Keratinocyte (primary cell): ENCODE measurements at regions of chr6 and their contacts with region 1.

Region 1: DNA sequence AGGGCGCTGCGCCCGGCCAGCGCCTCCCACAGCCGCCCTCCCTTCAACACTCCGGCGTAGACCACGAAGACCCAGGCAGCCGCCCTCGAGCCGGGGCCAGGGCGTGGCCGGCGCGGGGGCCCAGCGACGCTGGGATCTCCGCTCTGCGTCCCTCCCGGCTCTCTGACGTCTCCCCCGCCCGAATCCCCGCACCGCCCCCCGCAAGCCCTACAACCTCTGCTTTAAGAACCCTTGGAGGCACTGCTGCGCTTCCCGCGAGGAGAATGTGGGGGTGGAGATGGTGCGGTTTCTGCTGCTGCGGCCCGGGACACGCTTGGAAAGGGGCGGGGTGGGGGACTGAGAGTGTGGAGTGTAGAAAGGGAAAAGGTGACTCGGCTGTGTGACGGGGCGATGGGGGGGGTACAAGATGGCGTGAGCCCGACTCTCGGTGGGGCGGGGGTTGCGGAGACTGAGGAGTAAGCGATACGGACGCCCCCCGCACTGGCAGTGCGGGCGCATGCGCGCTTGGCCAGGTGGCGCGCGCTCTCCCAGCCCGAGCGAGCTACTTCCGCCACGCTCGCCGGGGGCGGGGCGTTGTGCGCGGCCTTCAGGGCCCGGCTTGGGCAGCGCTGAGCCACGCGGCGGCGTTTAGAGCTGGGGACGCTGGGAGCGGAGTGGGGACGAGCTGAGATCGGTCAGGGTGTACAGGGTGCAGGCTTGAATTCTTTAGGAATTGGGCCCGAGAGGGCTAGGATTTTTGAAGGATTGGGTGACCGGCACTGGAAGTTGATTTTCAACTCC is at the start of gene SUPT3H:
- DNase-seq: peak; percentile 33
- H3K4me3 ChIP-seq: peak within 1 kb of the TSS; percentile 83 to 89 (median 87)
- H3K27ac ChIP-seq: peak within 1 kb of the TSS; percentile 95
- H3K4me1 ChIP-seq: peaks cover 11% of the 10 kb centered on the region
- H3K27me3 ChIP-seq: no peaks in the 10 kb centered on the region
- CTCF ChIP-seq: peak in 2 of 3 experiments; percentile 28 to 35
- polyA plus RNA-seq, gene SUPT3H: 7.6 to 8.1 TPM (median 7.8 TPM) in 3 replicates

Region 2: GRCh38 chr6:44275749-44276648 is 1101.7 kb before region 1 on chr6:
- dilution Hi-C with region 1: no loop called
- DNase-seq: no peak
- H3K4me3 ChIP-seq: no peak overlapping the region
- H3K27ac ChIP-seq: no peak overlapping the region
- H3K4me1 ChIP-seq: no peaks in the 10 kb centered on the region
- H3K27me3 ChIP-seq: peaks cover 66% of the 10 kb centered on the region
- CTCF ChIP-seq: no peak

Region 3: GRCh38 chr6:45415315-45415714 is 37.6 kb after region 1 on chr6:
- dilution Hi-C with region 1: no loop called
- DNase-seq: no peak
- H3K4me3 ChIP-seq: no peak overlapping the region
- H3K27ac ChIP-seq: no peak overlapping the region
- H3K4me1 ChIP-seq: peaks cover 15% of the 10 kb centered on the region
- H3K27me3 ChIP-seq: peaks cover 3% of the 10 kb centered on the region
- CTCF ChIP-seq: no peak

Region 4: GRCh38 chr6:45566882-45567281 is 189.1 kb after region 1 on chr6:
- dilution Hi-C with region 1: no loop called
- DNase-seq: no peak
- H3K4me3 ChIP-seq: no peak overlapping the region
- H3K27ac ChIP-seq: no peak overlapping the region
- H3K4me1 ChIP-seq: peaks cover 22% of the 10 kb centered on the region
- H3K27me3 ChIP-seq: no peaks in the 10 kb centered on the region
- CTCF ChIP-seq: no peak

Region 5: DNA sequence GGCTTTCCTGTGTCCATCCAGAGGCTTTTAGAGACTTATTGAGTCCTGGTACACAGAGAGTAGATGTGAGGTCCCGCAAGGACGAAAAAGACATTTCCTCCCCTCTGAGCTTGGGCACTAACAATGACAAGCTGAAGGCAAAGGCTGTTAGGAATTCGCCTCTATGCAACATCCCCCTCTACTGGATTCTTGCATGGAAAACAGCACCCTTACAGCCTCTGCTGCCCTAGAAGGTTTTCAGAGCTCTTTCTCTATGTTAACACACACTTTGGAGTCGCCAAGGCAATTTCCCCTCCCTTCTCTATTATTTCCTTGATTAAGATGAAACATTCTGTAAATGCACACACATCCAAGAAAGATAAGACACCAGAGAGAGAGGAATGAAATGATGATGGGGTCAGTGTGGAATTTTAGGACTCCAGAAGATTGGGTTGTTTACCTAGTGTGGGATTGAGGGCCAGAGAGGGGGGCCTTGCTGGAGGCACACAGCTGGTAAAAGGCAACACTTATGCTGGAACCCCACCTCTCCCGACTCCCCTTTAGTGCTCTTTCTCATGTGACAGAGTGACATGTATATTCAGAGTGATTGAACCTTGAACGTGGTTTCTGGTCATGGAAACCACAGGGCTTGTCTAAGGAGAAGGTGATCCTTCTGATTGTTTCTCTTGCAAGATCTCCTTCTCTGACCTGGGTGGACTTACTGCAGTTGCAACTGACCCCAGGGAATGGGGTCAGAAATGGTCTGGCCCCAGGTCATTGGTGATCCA is 337.2 kb after region 1 on chr6:
- dilution Hi-C with region 1: loop called (anchors 25 kb)
- DNase-seq: no peak
- H3K4me3 ChIP-seq: no peak overlapping the region
- H3K27ac ChIP-seq: no peak overlapping the region
- H3K4me1 ChIP-seq: no peaks in the 10 kb centered on the region
- H3K27me3 ChIP-seq: no peaks in the 10 kb centered on the region
- CTCF ChIP-seq: peak; percentile 85 to 92 (median 88)

Region 6: DNA sequence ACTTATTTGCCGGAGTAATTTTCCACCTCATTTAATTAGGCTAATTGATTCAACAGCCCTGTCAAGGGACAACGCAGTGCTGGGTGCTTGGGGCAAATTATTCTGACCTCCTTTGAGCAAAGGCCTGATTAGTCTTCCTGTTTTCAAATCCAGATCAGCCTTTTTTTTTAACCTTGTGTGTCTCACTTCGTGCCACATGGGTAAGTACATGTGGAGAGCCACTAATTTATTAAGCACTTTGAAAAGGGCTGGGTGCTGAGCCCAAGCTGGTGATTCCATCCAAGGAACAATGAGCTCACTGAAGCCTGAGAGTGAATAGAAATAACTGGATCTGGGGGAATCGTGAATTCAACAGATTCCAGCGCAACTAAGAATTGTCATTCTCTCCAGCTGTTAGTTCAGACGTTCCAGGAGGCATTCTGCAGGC is 408.6 kb after region 1 on chr6:
- dilution Hi-C with region 1: no loop called
- DNase-seq: no peak
- H3K4me3 ChIP-seq: no peak overlapping the region
- H3K27ac ChIP-seq: no peak overlapping the region
- H3K4me1 ChIP-seq: peaks cover 20% of the 10 kb centered on the region
- H3K27me3 ChIP-seq: no peaks in the 10 kb centered on the region
- CTCF ChIP-seq: no peak